Activated naive CD4-positive, alpha-beta T cell treated with anti-CD3 and anti-CD28 coated beads for 36 hours (primary cell): ENCODE measurements at regions of chr7 and their contacts with region 1.

Region 1: GRCh38 chr7:135509903-135510602 is at the start of gene CNOT4:
- DNase-seq: peak; percentile 97
- H3K4me3 Mint-ChIP-seq: no peak within 1 kb of the TSS
- H3K27ac Mint-ChIP-seq: no peak within 1 kb of the TSS
- H3K4me1 Mint-ChIP-seq: peaks cover 22% of the 10 kb centered on the region
- H3K27me3 Mint-ChIP-seq: no peaks in the 10 kb centered on the region
- total RNA-seq, gene CNOT4: 16.6 to 20.3 TPM

Region 2: DNA sequence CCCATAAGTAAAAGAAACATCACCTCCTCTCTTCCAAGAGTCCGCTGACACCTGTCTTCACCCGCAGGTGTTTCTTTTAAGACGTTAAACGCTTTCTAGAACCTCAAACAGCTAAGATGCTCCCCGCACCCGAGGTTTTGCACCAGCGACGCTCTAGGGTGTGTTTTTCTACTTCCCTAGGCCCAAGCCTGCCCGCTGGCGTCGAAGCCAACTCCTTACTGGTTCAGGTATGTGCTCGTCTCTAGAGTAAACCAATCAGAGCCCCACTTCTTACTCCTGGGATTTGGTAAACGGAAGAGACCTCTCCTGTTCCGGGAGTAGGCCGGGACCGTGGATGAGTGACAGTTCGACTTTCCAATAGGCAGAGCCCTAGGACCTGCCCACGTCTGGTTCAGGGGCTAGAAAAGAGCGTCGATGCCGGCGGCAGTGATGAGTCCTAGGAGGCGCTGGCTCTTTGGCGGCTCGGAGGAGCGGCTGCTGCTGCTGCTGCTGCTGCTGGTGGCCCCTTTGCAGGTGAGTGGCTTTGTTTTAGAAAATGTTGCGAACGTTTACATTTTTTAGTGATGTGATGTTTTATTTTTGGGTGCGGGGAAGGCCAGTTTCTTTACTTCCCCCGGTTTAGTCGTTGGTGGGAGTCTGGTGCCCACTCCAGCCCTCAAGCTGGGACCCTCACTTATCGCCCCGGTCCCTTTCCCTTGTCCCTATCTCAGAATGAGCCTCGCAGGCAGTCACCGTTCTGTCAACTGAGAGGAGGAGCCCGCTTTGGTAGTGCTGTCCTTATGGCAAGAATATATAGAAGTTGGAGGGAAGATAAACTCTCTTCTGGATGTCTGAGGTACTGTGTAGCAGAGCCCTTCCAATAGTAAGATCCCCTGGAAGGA is 863.4 kb before region 1 on chr7 and contains the start of gene BPGM:
- CTCF ChIA-PET with region 1: no interaction called
- intact Hi-C with region 1: loop called (anchors 1 kb)
- DNase-seq: peak; percentile 99
- H3K4me3 Mint-ChIP-seq: no peak within 1 kb of the TSS
- H3K27ac Mint-ChIP-seq: no peak within 1 kb of the TSS
- H3K4me1 Mint-ChIP-seq: peaks cover 37% of the 10 kb centered on the region
- H3K27me3 Mint-ChIP-seq: no peaks in the 10 kb centered on the region
- total RNA-seq, gene BPGM: 13.9 to 14.2 TPM

Region 3: GRCh38 chr7:135211179-135211945 is 298.7 kb before region 1 on chr7 and contains the start of gene WDR91:
- CTCF ChIA-PET with region 1: no interaction called
- intact Hi-C with region 1: loop called (anchors 1 kb)
- DNase-seq: peak; percentile 96
- H3K4me3 Mint-ChIP-seq: peak within 1 kb of the TSS; percentile 98
- H3K27ac Mint-ChIP-seq: peak within 1 kb of the TSS; percentile 85
- H3K4me1 Mint-ChIP-seq: peaks cover 41% of the 10 kb centered on the region
- H3K27me3 Mint-ChIP-seq: no peaks in the 10 kb centered on the region
- total RNA-seq, gene WDR91: 10.6 to 11.1 TPM

Region 4: GRCh38 chr7:135499818-135500217 is 10.2 kb before region 1 on chr7:
- CTCF ChIA-PET with region 1: interaction called, 3 read pairs
- intact Hi-C with region 1: loop called (anchors 1 kb)
- DNase-seq: no peak
- H3K4me3 Mint-ChIP-seq: no peak overlapping the region
- H3K27ac Mint-ChIP-seq: peak overlapping the region; percentile 59
- H3K4me1 Mint-ChIP-seq: peaks cover 46% of the 10 kb centered on the region
- H3K27me3 Mint-ChIP-seq: no peaks in the 10 kb centered on the region

Region 5: DNA sequence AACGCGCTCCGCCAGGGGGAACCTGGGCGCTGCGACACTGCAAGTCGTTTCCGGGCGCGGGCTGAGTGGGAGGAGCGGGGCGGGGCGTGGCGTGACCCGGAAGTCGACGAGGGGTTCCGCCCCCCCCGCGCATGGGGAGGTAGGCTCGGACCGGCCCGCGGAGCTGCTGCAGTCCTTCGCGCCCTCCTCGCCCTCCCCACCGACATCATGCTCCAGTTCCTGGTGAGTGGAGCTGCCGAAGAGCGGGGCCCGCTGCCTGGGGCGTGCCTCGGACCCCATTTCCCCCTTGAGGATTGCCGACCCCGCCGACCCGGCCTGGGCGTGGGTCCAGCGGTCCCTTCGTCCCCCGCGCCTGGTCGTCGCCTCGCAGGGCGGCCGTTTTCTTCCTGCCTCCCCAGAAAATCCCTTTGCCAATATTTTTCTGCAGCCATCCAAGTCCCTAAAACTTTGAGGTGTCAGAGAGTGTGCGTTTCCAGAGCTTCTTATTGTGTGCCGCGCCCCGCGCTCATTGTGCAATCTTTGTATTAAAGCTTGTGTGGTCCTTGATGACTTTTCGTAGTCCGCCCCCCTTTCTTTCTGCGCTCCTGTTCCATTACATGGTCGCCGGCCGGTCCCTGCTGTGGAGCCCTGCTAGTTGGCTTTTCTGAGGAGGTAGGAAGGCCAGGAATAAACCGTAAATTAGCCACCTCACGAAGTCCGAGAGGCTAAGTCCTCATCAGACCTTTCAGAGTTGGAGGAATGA is 152.5 kb after region 1 on chr7 and contains the start of gene STMP1:
- CTCF ChIA-PET with region 1: no interaction called
- intact Hi-C with region 1: loop called (anchors 1 kb)
- DNase-seq: peak; percentile 97
- H3K4me3 Mint-ChIP-seq: peak within 1 kb of the TSS; percentile 98
- H3K27ac Mint-ChIP-seq: peak within 1 kb of the TSS; percentile 96
- H3K4me1 Mint-ChIP-seq: peaks cover 46% of the 10 kb centered on the region
- H3K27me3 Mint-ChIP-seq: no peaks in the 10 kb centered on the region
- total RNA-seq, gene STMP1: 21.5 to 21.6 TPM

Region 6: GRCh38 chr7:135757719-135758411 is 247.8 kb after region 1 on chr7:
- CTCF ChIA-PET with region 1: no interaction called
- intact Hi-C with region 1: no loop called
- DNase-seq: no peak
- H3K4me3 Mint-ChIP-seq: no peak overlapping the region
- H3K27ac Mint-ChIP-seq: no peak overlapping the region
- H3K4me1 Mint-ChIP-seq: no peaks in the 10 kb centered on the region
- H3K27me3 Mint-ChIP-seq: peaks cover 33% of the 10 kb centered on the region

Region 7: GRCh38 chr7:136009488-136010079 is 499.5 kb after region 1 on chr7:
- CTCF ChIA-PET with region 1: no interaction called
- intact Hi-C with region 1: loop called (anchors 2 kb)
- DNase-seq: no peak
- H3K4me3 Mint-ChIP-seq: no peak overlapping the region
- H3K27ac Mint-ChIP-seq: no peak overlapping the region
- H3K4me1 Mint-ChIP-seq: peaks cover 4% of the 10 kb centered on the region
- H3K27me3 Mint-ChIP-seq: peaks cover 10% of the 10 kb centered on the region

Region 8: GRCh38 chr7:136900005-136900404 is 1390.0 kb after region 1 on chr7:
- CTCF ChIA-PET with region 1: no interaction called
- intact Hi-C with region 1: no loop called
- DNase-seq: no peak
- H3K4me3 Mint-ChIP-seq: no peak overlapping the region
- H3K27ac Mint-ChIP-seq: no peak overlapping the region
- H3K4me1 Mint-ChIP-seq: no peaks in the 10 kb centered on the region
- H3K27me3 Mint-ChIP-seq: no peaks in the 10 kb centered on the region